ENCODE measurements at regions of chr15 and their contacts with region 1.

Region 1: DNA sequence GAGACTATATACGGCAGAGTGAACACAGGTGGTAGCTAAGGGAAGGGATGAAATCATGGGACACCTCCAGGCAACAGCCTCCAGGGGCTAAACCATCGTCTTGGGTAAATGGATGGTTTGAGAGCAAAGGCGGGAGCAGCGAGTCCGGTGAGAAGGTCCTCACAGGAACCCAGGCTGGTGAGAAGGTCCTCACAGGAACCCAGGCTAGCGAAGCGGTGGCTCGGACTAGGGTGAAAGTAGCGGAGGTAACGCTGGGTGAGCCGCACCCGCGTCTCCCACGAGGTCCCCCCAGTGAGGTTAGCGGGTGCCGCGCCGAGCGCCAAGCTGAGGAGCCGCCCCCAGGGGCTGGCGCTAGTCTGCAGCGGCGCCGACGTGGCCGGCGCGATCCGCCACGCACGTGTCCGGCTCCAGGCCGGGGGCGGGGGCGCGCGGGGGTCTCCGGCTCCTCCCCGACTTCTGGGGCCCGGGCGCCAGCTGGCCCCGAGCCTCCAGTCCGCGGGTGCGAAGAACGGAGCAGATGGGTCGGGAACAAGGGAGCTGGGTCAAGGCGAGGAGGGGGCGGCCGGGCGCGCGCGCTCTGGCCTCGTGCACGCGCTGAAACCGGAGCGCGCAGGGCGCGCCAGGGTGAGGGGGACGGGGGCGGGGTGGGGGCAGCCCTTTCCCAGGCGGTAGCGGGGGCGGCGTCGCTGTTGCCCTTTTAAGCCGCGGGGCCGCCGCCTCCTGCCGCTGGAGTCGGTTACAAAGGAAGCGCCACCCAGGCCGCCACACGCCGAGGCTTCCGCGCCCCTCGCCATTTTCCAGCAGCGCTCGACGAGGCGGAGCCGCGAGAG is at the start of gene UBE2Q2:
- DNase-seq: peak; percentile 78
- H3K4me3 Mint-ChIP-seq: peak within 1 kb of the TSS; percentile 98
- H3K27ac Mint-ChIP-seq: peak within 1 kb of the TSS; percentile 96
- H3K4me1 Mint-ChIP-seq: peaks cover 43% of the 10 kb centered on the region
- H3K27me3 Mint-ChIP-seq: peaks cover 18% of the 10 kb centered on the region
- total RNA-seq, gene UBE2Q2: 49.6 to 53.7 TPM

Region 2: GRCh38 chr15:75554717-75555116 is 288.2 kb before region 1 on chr15:
- CTCF ChIA-PET with region 1: no interaction called
- POLR2A ChIA-PET with region 1: no interaction called
- DNase-seq: no peak
- H3K4me3 Mint-ChIP-seq: no peak overlapping the region
- H3K27ac Mint-ChIP-seq: no peak overlapping the region
- H3K4me1 Mint-ChIP-seq: peaks cover 1% of the 10 kb centered on the region
- H3K27me3 Mint-ChIP-seq: no peaks in the 10 kb centered on the region

Region 3: DNA sequence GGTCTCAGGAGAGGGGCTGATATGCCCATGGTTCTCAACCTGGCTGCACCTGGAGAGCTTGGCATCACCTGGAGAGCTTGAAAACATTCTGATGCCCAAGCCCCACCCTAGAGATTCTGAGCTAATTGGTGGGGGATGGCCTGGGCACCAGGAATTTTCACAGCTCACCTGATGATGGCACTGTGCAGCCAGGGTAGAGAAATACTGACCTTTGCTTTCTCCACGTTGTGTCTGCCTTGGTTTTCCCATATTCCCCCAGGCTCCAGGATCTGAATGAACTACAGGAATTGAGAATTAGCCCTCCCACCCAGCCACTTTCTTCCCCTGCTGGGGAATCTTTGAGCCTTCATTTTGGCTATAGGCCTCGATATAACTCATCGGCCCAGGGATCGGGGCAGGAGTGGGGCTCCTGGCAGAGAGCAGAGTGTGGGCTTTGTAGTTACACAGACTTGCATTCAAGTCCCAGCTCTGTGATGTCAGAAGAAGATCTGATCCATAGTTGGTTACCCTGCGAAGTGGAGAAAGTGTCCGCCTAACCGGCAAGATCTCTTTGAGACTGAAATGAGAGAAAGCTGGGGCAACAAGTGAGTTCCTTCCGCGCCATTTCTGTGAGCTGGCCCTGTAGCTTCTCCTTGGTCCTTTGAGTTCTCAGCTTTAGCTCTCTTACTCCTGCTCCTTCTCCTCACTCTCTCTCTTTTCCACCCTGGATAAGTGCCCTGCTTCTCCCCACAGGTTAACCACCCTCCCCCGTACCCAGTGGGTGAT is 32.8 kb before region 1 on chr15:
- CTCF ChIA-PET with region 1: interaction called, 29 read pairs
- POLR2A ChIA-PET with region 1: interaction called, 22 read pairs
- DNase-seq: peak; percentile 32
- H3K4me3 Mint-ChIP-seq: no peak overlapping the region
- H3K27ac Mint-ChIP-seq: no peak overlapping the region
- H3K4me1 Mint-ChIP-seq: no peaks in the 10 kb centered on the region
- H3K27me3 Mint-ChIP-seq: peaks cover 11% of the 10 kb centered on the region

Region 4: GRCh38 chr15:75817138-75817935 is 25.6 kb before region 1 on chr15:
- CTCF ChIA-PET with region 1: interaction called, 29 read pairs
- POLR2A ChIA-PET with region 1: interaction called, 22 read pairs
- DNase-seq: no peak
- H3K4me3 Mint-ChIP-seq: peak overlapping the region; percentile 62
- H3K27ac Mint-ChIP-seq: peak overlapping the region; percentile 61
- H3K4me1 Mint-ChIP-seq: peaks cover 30% of the 10 kb centered on the region
- H3K27me3 Mint-ChIP-seq: no peaks in the 10 kb centered on the region

Region 5: DNA sequence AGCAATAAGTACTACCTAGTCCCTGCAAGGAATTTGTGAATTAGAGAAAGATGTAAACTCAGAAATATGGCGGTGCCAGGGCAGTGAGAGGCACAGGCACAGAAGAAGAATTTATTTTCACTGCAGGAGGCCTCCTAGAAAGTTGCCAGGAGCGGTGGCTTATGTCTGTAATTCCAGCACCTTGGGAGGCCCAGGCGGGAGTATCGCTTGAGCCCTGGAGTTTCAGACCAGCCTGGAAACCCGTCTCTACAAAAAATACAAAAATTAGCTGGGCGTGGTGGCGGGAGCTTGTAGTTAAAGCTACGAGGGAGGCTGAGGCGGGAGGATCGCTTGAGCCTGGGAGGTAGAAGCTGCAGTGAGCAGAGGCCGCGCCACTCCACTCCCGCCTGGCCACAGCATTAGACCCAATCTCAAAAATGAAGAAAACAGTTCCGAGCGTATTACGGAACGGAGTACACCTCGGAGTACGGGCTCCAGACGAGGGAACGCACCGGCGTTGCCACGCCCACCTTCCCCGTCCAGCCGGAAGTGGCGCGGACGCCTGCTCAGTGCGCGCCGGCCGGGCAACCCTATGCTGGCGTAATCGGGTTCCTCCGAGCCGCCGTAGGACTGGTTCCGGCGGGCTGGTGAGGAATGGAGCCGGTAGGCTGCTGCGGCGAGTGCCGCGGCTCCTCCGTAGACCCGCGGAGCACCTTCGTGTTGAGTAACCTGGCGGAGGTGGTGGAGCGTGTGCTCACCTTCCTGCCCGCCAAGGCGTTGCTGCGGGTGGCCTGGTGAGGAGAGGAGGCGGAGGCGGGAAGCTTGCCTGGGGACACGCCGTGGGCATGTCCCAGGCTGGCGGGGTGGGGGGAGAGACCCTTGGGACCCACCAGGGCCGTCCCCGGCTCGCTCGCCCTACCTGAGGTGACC is 60.6 kb after region 1 on chr15 and contains the start of gene FBXO22:
- CTCF ChIA-PET with region 1: no interaction called
- POLR2A ChIA-PET with region 1: interaction called, 21 read pairs
- DNase-seq: peak; percentile 93
- H3K4me3 Mint-ChIP-seq: peak within 1 kb of the TSS; percentile 97
- H3K27ac Mint-ChIP-seq: peak within 1 kb of the TSS; percentile 92
- H3K4me1 Mint-ChIP-seq: peaks cover 41% of the 10 kb centered on the region
- H3K27me3 Mint-ChIP-seq: no peaks in the 10 kb centered on the region
- total RNA-seq, gene FBXO22: 32.5 to 33.1 TPM

Measured in activated CD4-positive, alpha-beta memory T cell treated with anti-CD3 and anti-CD28 coated beads, Interleukin-2, amount 10 ng/mL, durations not matched to agents 7 days and 5 days (primary cell).